ENCODE measurements at regions of chr6 and their contacts with region 1.

Region 1: DNA sequence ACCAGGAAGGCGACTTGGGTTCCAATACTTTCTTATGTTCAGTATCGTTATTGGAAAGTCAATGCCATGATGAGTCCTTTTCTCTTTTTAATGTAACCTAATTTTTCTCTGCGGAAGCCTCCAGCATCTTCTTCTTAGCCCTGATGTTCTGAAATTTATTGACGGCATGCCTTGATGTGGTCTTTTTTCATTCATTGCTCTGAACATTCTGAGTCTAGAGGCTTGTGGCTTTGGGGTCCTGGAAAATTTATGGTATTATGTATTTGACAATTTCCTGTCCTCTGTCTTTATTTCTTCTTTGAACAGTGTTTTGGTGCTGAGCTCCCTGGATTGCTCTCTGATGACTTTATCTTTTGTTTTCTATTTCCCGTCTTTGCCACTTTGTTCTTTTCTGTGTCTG is 28.7 kb upstream of the MAS1 start:
- DNase-seq: no peak
- H3K4me3 ChIP-seq: no peak overlapping the region
- H3K27ac ChIP-seq: no peak overlapping the region
- H3K4me1 ChIP-seq: peaks cover 8% of the 10 kb centered on the region
- CTCF ChIP-seq: no peak

Region 2: GRCh38 chr6:159212028-159212427 is 650.1 kb before region 1 on chr6:
- CTCF ChIA-PET with region 1: no interaction called
- POLR2A ChIA-PET with region 1: no interaction called
- intact Hi-C with region 1: no loop called
- DNase-seq: peak; percentile 83
- H3K4me3 ChIP-seq: peak overlapping the region; percentile 12
- H3K27ac ChIP-seq: peak overlapping the region; percentile 50
- H3K4me1 ChIP-seq: peaks cover 41% of the 10 kb centered on the region
- CTCF ChIP-seq: no peak

Region 3: DNA sequence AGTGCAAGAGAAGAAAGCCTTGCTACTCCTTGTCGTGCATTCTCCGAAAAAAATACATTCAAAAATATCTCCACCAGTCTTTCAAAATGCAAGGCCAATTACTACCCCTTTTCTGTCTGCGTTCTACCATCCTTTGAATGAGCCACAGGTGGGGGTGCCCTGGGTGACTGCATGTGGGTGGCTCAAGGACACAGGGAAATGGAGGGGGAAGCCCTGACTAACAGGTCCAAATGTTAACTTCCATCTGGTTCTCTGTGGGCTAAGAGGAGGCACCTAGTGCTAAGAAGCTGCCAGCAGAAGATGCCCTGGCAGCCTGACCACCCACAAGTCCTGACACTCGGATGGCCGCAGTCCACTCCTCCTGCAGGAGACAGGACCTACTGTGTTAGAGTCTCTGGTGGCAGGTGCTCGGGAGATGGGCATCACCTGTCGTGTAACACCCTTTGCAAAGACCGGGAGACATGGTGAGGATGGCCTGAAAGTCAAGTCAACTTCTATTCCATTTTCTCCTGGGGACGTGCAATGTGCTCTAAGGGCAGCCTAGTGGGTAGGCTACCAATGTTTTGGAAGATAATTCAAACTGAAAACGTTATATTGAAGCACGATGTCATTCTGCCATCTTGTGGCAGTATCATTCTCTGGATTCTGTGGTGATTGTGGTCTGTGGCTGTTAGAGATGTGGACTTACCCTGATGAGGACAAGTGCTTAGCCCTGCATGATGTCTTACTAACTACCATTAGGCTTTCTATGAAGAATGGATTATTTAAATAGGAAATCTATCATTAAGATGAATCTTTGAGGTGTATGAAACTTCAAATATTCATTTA is 79.4 kb after region 1 on chr6:
- CTCF ChIA-PET with region 1: no interaction called
- POLR2A ChIA-PET with region 1: no interaction called
- intact Hi-C with region 1: loop called (anchors 5 kb)
- DNase-seq: peak; percentile 51
- H3K4me3 ChIP-seq: no peak overlapping the region
- H3K27ac ChIP-seq: no peak overlapping the region
- H3K4me1 ChIP-seq: no peaks in the 10 kb centered on the region
- CTCF ChIP-seq: peak; percentile 77

Region 4: DNA sequence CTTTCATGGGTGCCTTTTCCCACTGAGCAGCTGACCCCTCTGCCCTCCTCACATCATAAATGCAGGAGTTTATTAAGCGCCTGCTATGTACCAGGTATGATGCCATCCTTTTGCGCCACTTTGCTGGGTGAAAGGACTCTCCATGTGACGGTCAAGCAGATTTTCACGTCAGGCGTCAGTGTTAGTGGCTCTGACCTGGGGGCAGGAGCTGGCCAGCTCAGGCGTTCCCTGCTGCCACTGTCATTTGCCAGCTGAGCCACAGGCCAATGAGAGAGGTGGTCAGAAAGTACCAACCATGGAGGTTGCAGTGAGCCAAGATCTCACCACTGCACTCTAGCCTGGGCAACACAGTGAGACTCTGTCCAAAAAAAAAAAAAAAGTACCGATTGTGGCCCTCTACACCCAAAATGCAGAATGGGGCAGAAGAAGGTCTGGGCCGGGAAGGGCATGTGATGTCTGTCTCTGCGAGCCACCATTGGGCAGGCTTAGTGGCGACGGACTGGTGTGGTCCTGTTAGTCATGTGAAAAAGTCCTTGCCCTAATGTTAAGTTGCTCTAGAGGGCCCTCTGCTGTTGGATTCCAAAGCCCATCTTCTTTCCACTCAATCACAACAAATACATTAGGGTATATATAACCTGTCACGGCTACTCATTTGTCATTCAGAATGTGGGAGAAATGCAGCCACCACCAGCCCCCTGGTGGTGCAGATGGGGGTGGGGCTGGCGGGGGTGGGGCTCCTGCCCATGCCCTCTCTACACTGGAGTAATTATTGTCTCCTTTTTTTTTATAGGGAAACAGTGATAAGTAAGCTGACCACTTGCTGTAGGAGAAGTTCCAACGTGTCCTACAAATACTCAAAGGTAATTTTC is 241.1 kb after region 1 on chr6:
- CTCF ChIA-PET with region 1: no interaction called
- POLR2A ChIA-PET with region 1: no interaction called
- intact Hi-C with region 1: loop called (anchors 2 kb)
- DNase-seq: peak; percentile 47
- H3K4me3 ChIP-seq: no peak overlapping the region
- H3K27ac ChIP-seq: no peak overlapping the region
- H3K4me1 ChIP-seq: no peaks in the 10 kb centered on the region
- CTCF ChIP-seq: peak; percentile 76

Region 5: DNA sequence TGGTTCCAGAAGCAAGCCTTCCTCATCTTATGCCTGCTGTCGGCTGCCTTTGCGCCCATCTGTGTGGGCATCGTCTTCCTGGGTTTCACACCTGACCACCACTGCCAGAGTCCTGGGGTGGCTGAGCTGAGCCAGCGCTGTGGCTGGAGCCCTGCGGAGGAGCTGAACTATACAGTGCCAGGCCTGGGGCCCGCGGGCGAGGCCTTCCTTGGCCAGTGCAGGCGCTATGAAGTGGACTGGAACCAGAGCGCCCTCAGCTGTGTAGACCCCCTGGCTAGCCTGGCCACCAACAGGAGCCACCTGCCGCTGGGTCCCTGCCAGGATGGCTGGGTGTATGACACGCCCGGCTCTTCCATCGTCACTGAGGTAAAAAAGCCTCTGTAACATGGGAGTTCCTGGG is 259.9 kb after region 1 on chr6:
- CTCF ChIA-PET with region 1: no interaction called
- POLR2A ChIA-PET with region 1: no interaction called
- intact Hi-C with region 1: no loop called
- DNase-seq: no peak
- H3K4me3 ChIP-seq: no peak overlapping the region
- H3K27ac ChIP-seq: no peak overlapping the region
- H3K4me1 ChIP-seq: no peaks in the 10 kb centered on the region
- CTCF ChIP-seq: no peak

Region 6: GRCh38 chr6:160455541-160456213 is 593.6 kb after region 1 on chr6:
- CTCF ChIA-PET with region 1: interaction called, 3 read pairs
- POLR2A ChIA-PET with region 1: no interaction called
- intact Hi-C with region 1: loop called (anchors 1 kb)
- DNase-seq: peak; percentile 56
- H3K4me3 ChIP-seq: no peak overlapping the region
- H3K27ac ChIP-seq: no peak overlapping the region
- H3K4me1 ChIP-seq: no peaks in the 10 kb centered on the region
- CTCF ChIP-seq: peak; percentile 95

Measured in OCI-LY7 (cell line).